Thyroid gland (tissue), 4 donors: ENCODE measurements at regions of chr19 and their contacts with region 1.

Region 1: GRCh38 chr19:39550197-39550596 is 10.2 kb upstream of the EID2 start:
- DNase-seq: no peak
- H3K4me3 ChIP-seq: no peak overlapping the region
- H3K27ac ChIP-seq: no peak overlapping the region
- H3K4me1 ChIP-seq: peaks cover 5 to 10% of the 10 kb centered on the region in 2 donors
- H3K27me3 ChIP-seq: no peaks in the 10 kb centered on the region
- CTCF ChIP-seq: no peak
- POLR2A ChIP-seq: no peak

Region 2: GRCh38 chr19:39671738-39672363 is 121.7 kb after region 1 on chr19:
- intact Hi-C with region 1: loop called (anchors 5 kb)
- DNase-seq: peak; percentile 35 to 42
- H3K4me3 ChIP-seq: no peak overlapping the region
- H3K27ac ChIP-seq: no peak overlapping the region
- H3K4me1 ChIP-seq: no peaks in the 10 kb centered on the region
- H3K27me3 ChIP-seq: no peaks in the 10 kb centered on the region
- CTCF ChIP-seq: peak in 5 of 6 experiments; percentile 22 to 81 (median 62)
- POLR2A ChIP-seq: no peak